Sigmoid colon (tissue), 7 donors: ENCODE measurements at regions of chr9 and their contacts with region 1.

Region 1: DNA sequence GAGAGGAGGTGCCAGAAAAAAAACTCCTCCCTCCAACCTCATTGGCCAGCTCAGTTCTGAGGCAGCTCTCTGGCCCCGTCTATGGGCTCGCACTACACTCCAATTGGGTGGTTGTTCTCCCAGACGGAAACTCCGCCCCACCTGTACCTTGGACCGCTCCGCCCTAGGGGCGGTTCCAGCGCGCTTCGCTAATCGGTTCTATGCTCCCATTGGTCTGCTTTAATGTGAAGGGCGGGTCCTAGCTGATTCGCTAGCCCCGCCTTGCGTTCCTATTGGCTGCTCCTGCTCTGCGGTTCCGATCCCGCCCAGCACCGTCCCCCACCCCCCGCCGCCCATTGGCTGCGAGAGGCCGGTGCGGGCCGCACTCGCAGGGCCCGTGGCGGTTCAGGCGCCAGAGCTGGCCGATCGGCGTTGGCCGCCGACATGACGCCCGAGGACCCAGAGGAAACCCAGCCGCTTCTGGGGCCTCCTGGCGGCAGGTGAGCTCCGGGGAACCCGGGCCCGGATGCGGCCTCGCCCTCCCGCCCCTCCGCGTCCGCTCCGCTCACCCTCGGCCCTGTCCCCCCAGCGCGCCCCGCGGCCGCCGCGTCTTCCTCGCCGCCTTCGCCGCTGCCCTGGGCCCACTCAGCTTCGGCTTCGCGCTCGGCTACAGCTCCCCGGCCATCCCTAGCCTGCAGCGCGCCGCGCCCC is at the start of gene SLC2A8:
- DNase-seq: peak; percentile 100
- H3K4me3 ChIP-seq: peak within 1 kb of the TSS; percentile 84 to 97 (median 96)
- H3K27ac ChIP-seq: peak within 1 kb of the TSS; percentile 92 to 98 (median 95)
- H3K4me1 ChIP-seq: peaks cover 0 to 51% (median 29%) of the 10 kb centered on the region in 4 donors
- H3K27me3 ChIP-seq: no peaks in the 10 kb centered on the region
- CTCF ChIP-seq: peak in 1 of 4 experiments; percentile 21
- EP300 ChIP-seq: no peak
- POLR2A ChIP-seq: peak; percentile 74 to 80
- total RNA-seq, gene SLC2A8: 45.1 to 68.7 (median 64.4) TPM

Region 2: GRCh38 chr9:127224178-127224882 is 172.6 kb before region 1 on chr9:
- intact Hi-C with region 1: loop called (anchors 2 kb)
- DNase-seq: peak; percentile 97
- H3K4me3 ChIP-seq: peak overlapping the region; percentile 36 to 84 (median 68)
- H3K27ac ChIP-seq: peak overlapping the region; percentile 80 to 85 (median 82)
- H3K4me1 ChIP-seq: peaks cover 0 to 23% (median 20%) of the 10 kb centered on the region in 4 donors
- H3K27me3 ChIP-seq: no peaks in the 10 kb centered on the region
- CTCF ChIP-seq: peak in 2 of 4 experiments; percentile 18 to 32
- EP300 ChIP-seq: no peak
- POLR2A ChIP-seq: no peak

Region 3: GRCh38 chr9:127244609-127245601 is 152.0 kb before region 1 on chr9:
- intact Hi-C with region 1: loop called (anchors 5 kb)
- DNase-seq: peak; percentile 99
- H3K4me3 ChIP-seq: peak overlapping the region; percentile 36 to 61 (median 58)
- H3K27ac ChIP-seq: peak overlapping the region; percentile 75 to 86 (median 84)
- H3K4me1 ChIP-seq: peaks cover 0 to 9% (median 5%) of the 10 kb centered on the region in 4 donors
- H3K27me3 ChIP-seq: no peaks in the 10 kb centered on the region
- CTCF ChIP-seq: no peak
- EP300 ChIP-seq: peak in 1 of 4 donors; percentile 17
- POLR2A ChIP-seq: peak; percentile 26 to 47